Sigmoid colon (tissue), 7 donors: ENCODE measurements at regions of chr15 and their contacts with region 1.

Region 1: DNA sequence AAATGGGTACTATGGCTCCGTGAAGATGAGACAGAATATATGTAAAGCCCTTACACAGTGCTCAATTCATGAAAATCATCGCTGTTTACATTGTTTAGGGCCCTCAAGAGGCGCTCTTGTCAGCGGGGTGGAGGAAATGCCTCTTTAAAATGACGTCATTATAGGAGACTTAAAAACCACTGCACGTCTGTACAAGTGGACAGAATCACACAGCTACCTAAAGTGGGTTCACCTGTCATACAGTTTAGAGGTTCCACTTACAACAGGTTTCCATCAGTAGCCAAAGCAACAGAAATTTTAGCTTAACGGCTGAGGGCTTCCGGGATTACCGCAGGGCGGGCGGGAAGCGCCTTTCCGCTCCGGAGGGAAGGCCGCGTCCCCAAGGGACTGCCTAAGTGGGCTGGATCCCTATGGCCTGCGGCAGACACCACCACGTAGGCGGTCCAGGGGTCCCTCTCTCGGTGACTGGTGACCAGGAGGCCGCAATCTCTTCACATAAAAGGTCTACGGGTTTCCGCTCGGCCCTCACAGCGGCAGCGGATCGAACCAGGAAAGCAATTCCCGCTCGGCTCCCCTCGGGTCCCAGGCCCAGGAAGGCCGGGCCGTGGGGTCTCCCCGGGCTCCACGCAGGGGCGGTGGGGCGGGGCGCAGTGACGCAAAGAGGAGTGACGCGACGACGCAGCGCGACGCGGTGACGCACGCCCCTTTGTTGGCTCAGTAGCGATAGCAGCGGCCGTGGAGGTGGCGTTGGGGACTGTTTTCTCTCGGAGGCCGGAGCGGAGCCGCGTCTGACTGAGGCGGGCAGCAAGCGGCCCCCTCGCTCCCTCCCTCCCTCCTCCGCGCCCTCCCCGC is at the start of gene ARIH1:
- DNase-seq: peak; percentile 99
- H3K4me3 ChIP-seq: peak within 1 kb of the TSS; percentile 58 to 91 (median 84)
- H3K27ac ChIP-seq: peak within 1 kb of the TSS; percentile 99
- H3K4me1 ChIP-seq: peaks cover 0 to 46% (median 43%) of the 10 kb centered on the region in 4 donors
- H3K27me3 ChIP-seq: no peaks in the 10 kb centered on the region
- CTCF ChIP-seq: no peak
- EP300 ChIP-seq: peak in 2 of 4 donors; percentile 69 to 85
- POLR2A ChIP-seq: peak; percentile 98 to 99
- total RNA-seq, gene ARIH1: 36.4 to 69.5 (median 45.2) TPM

Region 2: GRCh38 chr15:71853543-71853942 is 620.3 kb before region 1 on chr15:
- intact Hi-C with region 1: no loop called
- DNase-seq: no peak
- H3K4me3 ChIP-seq: no peak overlapping the region
- H3K27ac ChIP-seq: no peak overlapping the region
- H3K4me1 ChIP-seq: no peaks in the 10 kb centered on the region
- H3K27me3 ChIP-seq: no peaks in the 10 kb centered on the region
- CTCF ChIP-seq: no peak
- EP300 ChIP-seq: no peak
- POLR2A ChIP-seq: no peak

Region 3: DNA sequence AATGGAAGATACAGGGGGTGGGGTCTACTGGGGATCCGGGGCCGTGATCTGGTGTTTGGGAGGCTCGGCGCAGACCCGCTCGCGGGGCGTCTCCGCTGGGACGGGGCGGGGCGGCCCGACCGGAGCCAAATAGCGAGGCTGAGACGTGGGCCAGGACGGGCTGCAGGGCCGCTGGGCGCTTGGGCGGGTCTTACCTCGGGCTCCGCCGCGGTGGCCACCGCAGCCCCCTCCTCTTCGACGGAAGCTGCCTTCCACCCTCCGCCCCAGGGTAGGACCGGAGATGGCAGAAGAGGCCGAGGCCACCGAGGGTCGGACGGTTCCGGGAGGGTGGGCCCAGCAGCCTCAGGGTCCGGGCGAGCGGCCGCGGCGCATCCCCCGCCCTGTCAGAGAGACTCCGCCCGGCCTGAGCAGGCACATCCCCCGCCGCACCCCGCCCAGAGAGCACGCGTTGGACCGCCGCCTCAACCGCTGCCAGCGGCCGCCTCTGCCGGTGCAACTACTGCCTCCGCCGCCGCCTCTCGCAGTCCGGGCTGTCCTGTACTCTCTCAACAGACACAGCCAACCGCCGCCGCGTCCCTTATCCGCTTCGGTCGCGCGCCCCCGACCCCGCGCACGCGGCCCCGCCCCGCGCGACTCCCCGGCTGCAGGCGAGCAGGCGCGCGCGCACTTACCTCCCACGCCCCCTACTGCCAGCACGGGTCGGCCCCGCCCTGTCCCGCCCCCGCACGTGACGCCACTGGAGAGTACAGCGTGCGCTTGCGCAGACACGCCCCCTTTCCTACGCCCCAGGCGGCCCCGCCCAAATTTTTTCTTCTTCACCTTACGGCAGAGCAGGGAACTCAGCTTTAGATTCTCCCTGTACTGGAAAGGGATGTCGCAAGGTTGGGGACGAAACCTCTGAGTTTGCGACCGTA is 356.1 kb before region 1 on chr15 and contains the start of gene MYO9A:
- intact Hi-C with region 1: loop called (anchors 5 kb)
- DNase-seq: peak; percentile 98
- H3K4me3 ChIP-seq: peak within 1 kb of the TSS; percentile 71 to 93 (median 80)
- H3K27ac ChIP-seq: peak within 1 kb of the TSS; percentile 92 to 98 (median 94)
- H3K4me1 ChIP-seq: peaks cover 0 to 48% (median 39%) of the 10 kb centered on the region in 4 donors
- H3K27me3 ChIP-seq: no peaks in the 10 kb centered on the region
- CTCF ChIP-seq: no peak
- EP300 ChIP-seq: peak in 1 of 4 donors; percentile 10
- POLR2A ChIP-seq: peak in 1 of 2 donors; percentile 49
- total RNA-seq, gene MYO9A: 55.8 to 80.0 (median 62.8) TPM

Region 4: DNA sequence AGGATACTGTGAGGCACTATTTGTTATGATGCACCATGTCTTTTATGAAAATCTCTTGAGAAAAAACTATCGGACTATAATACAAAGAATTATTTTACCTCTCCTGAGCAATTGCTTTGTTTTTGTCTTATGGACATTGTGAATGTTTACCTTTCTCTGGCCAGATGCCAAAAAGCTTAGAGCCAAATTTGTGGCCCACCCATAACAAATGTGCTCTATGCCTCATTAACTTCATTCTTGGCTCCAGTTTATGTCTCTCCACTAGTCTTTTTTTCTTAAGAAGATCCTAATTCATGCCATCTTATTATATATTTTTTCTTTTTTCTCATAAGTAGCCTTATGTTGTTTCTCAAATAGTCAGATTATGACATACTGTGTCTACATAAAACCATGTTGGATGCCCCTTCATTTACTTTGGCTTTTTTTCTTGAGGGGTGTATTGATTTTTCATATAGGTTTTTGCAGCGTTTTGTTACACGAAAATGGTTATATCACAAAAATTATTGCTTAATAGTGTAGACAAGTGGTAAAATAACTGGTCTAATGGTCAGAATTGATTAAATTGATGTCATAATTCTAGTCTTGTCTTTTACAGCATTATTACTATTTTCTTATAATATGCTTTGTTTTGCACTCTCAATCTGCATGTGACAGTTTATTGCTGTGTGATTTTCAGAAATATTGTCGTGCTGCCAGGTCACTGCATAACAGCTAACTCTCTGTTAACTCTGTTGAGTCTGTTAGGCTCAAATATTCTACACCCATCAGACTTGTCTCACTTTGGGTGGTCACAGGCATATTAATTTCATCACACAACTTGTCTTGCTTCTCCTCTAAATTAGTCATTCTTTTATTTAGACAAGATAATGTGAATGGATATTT is 337.4 kb before region 1 on chr15:
- intact Hi-C with region 1: no loop called
- DNase-seq: no peak
- H3K4me3 ChIP-seq: no peak overlapping the region
- H3K27ac ChIP-seq: no peak overlapping the region
- H3K4me1 ChIP-seq: peaks cover 0 to 10% (median 0%) of the 10 kb centered on the region in 4 donors
- H3K27me3 ChIP-seq: no peaks in the 10 kb centered on the region
- CTCF ChIP-seq: no peak
- EP300 ChIP-seq: no peak
- POLR2A ChIP-seq: no peak

Region 5: GRCh38 chr15:72339777-72340177 is 134.1 kb before region 1 on chr15:
- intact Hi-C with region 1: loop called (anchors 2 kb)
- DNase-seq: no peak
- H3K4me3 ChIP-seq: no peak overlapping the region
- H3K27ac ChIP-seq: peak overlapping the region; percentile 70 to 84 (median 78)
- H3K4me1 ChIP-seq: peaks cover 0 to 21% (median 19%) of the 10 kb centered on the region in 4 donors
- H3K27me3 ChIP-seq: no peaks in the 10 kb centered on the region
- CTCF ChIP-seq: no peak
- EP300 ChIP-seq: peak in 3 of 4 donors; percentile 40 to 51 (median 43)
- POLR2A ChIP-seq: no peak

Region 6: GRCh38 chr15:72375847-72376581 is 97.8 kb before region 1 on chr15 and contains the start of gene HEXA:
- intact Hi-C with region 1: loop called (anchors 5 kb)
- DNase-seq: peak; percentile 99
- H3K4me3 ChIP-seq: peak within 1 kb of the TSS; percentile 70 to 85 (median 78)
- H3K27ac ChIP-seq: peak within 1 kb of the TSS; percentile 82 to 86 (median 84)
- H3K4me1 ChIP-seq: peaks cover 0 to 33% (median 24%) of the 10 kb centered on the region in 4 donors
- H3K27me3 ChIP-seq: no peaks in the 10 kb centered on the region
- CTCF ChIP-seq: no peak
- EP300 ChIP-seq: peak in 2 of 4 donors; percentile 52 to 79
- POLR2A ChIP-seq: peak; percentile 59 to 74
- total RNA-seq, gene HEXA: 56.0 to 80.0 (median 66.7) TPM

Region 7: DNA sequence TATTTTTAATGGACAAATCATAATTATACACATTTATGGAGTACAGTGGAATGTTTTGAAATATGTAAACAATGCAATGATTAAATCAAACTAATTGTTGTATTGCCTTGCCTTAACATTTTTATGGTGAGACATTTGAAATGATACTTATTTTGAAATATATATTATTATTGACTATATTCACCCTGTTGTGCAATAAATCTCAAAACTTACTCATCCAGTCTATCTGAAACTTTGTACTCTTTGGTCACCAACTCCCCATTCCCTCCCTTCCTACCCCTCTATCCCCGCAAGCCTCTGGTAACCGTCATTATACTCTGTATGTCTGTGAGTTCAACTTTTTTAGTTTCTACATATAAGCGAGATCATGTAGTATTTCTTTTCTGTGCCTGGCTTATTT is 106.0 kb after region 1 on chr15:
- intact Hi-C with region 1: no loop called
- DNase-seq: no peak
- H3K4me3 ChIP-seq: no peak overlapping the region
- H3K27ac ChIP-seq: no peak overlapping the region
- H3K4me1 ChIP-seq: no peaks in the 10 kb centered on the region
- H3K27me3 ChIP-seq: no peaks in the 10 kb centered on the region
- CTCF ChIP-seq: no peak
- EP300 ChIP-seq: no peak
- POLR2A ChIP-seq: no peak

Region 8: DNA sequence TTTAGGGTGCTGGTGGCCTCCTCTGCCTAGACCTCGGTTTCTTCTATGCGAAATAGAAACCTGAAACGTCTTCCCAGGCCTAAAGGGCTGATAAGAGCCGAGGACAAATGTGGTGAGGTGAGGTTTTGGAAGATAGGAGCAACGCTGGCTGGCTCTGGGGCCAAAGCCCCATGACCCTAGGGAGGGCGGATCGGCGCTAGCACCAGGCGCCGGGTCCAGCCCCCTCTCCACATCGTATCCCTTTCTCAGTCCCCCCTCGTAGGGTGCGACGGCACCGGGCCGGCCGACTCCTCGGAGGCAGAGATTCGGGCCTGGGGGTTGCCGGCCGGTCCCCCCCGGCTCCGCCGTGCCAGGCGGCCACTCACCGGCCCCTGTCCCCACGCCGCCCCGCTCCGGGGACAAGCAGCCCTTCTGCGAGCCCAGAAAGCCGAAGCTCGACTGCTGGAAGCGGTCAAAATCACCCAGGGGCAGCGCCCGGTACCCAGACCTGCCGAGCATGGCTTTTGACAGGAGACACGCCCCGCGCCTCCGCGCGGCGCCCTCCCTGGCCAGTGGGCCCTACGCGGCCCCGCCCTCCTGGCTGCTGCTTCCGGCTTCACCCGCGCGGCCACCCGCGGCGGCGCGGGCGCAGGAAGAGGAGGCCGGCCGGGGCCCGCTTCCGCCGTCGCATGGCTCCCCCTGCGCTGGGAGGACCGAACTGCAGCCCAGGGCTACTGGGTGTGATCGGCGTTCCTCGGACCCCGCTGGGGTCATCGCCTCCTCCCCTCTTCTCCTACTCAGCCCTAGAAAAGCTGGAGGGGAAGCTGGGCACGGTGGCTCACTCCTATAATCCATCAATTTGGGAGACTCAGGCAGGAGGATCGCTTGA is 1518.1 kb after region 1 on chr15 and contains the start of gene STOML1:
- intact Hi-C with region 1: loop called (anchors 10 kb)
- DNase-seq: peak; percentile 94
- H3K4me3 ChIP-seq: peak within 1 kb of the TSS; percentile 73 to 91 (median 79)
- H3K27ac ChIP-seq: peak within 1 kb of the TSS; percentile 84 to 95 (median 88)
- H3K4me1 ChIP-seq: peaks cover 0 to 82% (median 73%) of the 10 kb centered on the region in 4 donors
- H3K27me3 ChIP-seq: no peaks in the 10 kb centered on the region
- CTCF ChIP-seq: peak; percentile 61 to 94 (median 74)
- EP300 ChIP-seq: no peak
- POLR2A ChIP-seq: peak in 1 of 2 donors; percentile 31
- total RNA-seq, gene STOML1: 10.0 to 17.8 (median 13.8) TPM